ENCODE measurements at regions of chr7 and their contacts with region 1.

Region 1: GRCh38 chr7:44847508-44847920 is 373 bp downstream of the H2AZ2 start:
- DNase-seq: peak; percentile 89
- ATAC-seq: peak; percentile 83 to 88

Region 2: DNA sequence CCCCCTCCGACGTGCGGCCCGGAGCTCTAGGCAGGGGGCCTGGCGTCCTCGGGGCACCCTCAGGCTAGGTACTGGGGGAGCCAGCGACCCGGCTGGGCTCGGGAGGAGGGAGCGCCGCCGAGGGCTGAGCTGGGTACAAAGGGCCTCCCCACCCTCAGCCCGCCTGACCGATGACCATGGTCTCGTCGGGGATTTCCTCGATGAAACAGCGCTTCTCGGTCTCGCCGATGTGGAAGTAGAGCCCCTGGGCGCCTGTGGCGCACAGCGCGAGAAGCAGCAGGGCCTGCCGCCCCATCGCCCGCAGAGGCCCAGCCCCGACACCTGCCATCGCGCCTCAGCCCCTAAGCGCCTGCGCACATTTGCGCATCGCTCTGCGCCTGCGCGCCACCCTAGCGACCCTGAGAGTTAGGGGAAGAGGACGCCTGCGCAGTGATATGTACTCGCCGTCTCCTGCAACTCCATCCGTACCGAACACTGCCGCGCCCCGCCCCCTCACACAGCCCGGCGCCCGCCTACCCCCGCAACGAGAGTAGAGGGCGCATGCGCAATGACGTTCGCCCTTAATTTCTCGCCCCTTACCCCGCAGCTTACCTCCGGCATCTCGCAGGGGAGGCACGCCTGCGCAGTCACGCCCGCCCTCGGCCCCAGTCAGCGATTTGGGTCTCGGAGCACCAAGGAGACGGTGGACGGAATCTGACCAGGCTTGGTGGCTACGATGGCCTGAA is 265.5 kb before region 1 on chr7 and contains the start of gene TMED4:
- intact Hi-C with region 1: loop called (anchors 2 to 5 kb)
- DNase-seq: peak; percentile 100
- ATAC-seq: peak; percentile 99
- total RNA-seq, gene TMED4: 55.1 to 73.2 TPM

Region 3: DNA sequence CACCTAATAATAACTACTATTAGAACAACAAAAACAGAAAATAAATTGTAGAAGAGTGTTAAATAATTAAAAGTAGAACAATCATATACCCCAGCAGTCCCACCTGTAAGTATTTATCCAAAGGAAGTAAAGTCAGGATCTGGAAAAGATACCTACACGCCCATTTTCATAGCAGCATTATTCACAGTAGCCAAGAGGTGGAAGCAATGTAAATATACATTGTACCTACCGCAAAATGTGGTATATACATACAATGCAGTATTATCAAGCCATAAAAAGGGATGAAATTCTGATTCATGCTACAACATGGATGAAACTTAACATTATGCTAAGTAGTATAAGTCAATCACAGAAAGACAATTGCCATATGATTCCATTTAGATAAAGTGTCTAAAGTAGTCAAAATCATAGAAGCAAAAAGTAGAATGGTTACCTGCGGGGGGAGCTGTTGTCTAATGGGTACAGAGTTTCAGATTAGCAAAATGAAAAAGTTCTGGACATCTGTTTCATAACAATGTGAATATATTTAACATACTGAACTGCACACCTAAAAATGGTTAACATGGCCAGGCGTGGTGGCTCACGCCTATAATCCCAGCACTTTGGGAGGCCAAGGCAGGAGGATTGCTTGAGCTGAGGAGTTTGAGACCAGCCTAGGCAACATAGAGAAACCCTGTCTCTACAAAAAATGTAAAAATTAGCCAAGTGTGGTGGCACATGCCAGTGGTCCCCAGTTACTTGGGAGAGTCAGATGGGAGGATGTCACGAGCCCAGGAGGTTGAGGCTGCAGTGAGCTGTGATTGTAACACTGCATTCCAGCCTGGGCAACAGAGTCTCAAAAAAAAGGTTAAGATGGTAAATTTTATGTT is 259.4 kb before region 1 on chr7:
- intact Hi-C with region 1: loop called (anchors 2 to 5 kb)
- DNase-seq: peak; percentile 47
- ATAC-seq: peak; percentile 61 to 72

Region 4: DNA sequence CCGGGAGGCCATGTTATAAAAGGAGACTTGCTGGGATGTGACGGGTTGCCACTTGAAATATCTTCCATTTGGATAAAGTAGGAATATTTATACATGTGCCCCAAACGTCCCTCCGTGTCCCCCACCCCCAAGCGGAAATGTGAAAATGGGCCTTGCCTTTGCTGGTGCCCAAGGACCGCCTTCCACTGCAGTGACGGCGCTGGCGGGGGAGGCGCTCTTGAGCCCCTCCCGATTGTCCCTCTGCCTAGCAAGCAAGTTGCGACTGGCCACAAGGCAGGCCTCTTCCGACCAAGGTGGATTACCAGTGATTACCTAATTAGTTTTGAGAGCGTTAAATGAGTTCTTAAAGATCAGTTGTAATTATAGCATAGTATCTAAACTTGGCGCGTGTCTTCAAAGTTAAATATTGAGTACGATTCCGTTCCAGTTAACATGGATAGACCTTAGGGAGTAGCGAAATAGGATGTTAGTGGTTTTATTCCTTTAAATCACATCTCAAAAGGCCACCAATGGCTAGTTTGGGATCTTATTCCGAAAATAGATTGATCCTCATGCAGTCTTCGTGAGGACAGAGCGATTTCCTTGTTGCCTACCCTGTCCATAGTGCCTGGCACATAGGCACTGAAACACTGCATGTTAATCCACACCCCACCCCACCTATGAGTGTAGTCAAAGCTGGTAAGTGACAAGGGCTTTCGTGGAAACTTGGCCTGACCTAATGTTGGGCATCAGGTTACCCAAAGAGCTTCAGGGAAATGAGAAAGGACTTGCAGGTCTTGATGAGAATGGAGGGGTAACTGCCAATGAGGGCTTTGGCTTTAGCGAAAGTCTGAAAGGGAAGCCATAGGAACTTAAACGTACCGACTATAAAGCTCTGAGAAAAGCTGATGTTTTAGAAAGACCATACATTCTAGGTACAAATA is 49.9 kb before region 1 on chr7:
- intact Hi-C with region 1: loop called in 1 of 2 experiments (anchors 5 kb)
- DNase-seq: peak; percentile 90
- ATAC-seq: peak; percentile 81 to 82

Region 5: DNA sequence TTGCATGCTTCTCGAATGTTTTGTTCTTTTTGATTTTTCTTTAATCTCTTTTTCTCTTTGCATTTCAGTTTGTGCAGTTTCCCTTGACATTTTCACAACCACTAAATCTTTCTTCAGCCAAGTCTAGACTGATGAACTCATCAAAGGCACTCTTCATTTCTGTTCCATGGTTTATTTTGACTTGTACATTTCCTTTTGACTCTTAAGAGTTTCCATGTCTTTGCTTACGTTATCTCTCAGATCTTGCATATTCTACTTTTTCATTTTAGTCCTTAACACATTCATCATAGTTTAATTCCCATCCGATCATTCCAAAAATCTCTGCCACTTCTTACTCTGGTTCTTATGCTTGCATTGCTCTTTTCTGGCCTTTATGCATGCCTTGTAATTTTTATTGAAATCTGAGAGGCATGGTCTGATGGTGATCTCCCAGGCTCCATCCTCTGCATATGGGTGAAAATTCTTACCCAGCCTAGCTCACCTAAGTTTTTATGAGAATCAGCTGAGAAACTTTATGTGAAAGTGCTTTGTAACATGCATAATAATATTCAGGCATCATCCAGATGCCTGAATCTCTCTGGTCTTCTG is 1276.3 kb after region 1 on chr7:
- intact Hi-C with region 1: no loop called
- DNase-seq: no peak
- ATAC-seq: no peak